Activated CD8-positive, alpha-beta T cell treated with anti-CD3 and anti-CD28 coated beads, Interleukin-2, amount 10 ng/mL, durations not matched to agents 7 days and 5 days (primary cell): ENCODE measurements at regions of chr14 and their contacts with region 1.

Region 1: GRCh38 chr14:90758028-90758889 is 58.0 kb downstream of the TTC7B start:
- DNase-seq: peak; percentile 94
- ATAC-seq: peak; percentile 96
- H3K4me3 Mint-ChIP-seq: peak overlapping the region; percentile 68
- H3K27ac Mint-ChIP-seq: peak overlapping the region; percentile 83
- H3K4me1 Mint-ChIP-seq: peaks cover 13% of the 10 kb centered on the region
- H3K27me3 Mint-ChIP-seq: peaks cover 32% of the 10 kb centered on the region

Region 2: DNA sequence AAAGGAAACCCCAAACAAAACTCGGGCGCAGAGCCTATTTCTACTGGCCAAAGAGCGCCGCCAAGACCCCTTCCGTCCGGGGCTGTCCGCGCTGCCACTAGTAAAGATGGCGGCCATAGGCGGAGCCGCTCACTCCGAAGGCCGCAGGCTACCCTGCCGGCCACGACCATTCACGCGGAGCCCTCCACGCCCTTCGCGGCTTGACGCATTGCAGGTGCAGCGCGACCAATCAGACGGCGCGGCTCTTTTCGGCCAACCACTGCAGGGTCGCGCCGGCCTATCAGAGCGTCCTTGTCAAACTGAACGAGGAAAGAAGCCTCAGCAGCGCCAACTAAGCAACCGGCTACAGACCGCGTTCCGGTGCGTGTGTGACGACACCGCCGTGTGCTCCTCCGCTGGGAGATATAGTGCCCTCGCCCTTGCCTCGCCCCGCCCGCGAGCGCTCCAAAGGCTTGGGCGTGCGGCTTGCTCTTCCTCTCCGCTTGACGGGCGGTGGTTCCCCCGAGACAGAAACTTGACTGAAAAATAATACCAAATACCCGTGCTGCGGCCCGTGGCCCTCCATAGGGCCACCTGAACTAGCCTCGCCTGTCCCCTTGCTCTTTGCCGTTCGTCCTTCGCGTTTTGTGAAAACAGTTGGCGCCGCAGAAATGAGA is 375.1 kb before region 1 on chr14:
- CTCF ChIA-PET with region 1: interaction called, 13 read pairs
- POLR2A ChIA-PET with region 1: interaction called, 3 read pairs
- DNase-seq: peak; percentile 99
- ATAC-seq: peak; percentile 88
- H3K4me3 Mint-ChIP-seq: no peak overlapping the region
- H3K27ac Mint-ChIP-seq: no peak overlapping the region
- H3K4me1 Mint-ChIP-seq: peaks cover 23% of the 10 kb centered on the region
- H3K27me3 Mint-ChIP-seq: no peaks in the 10 kb centered on the region

Region 3: GRCh38 chr14:90697577-90698206 is 60.6 kb before region 1 on chr14:
- CTCF ChIA-PET with region 1: interaction called, 27 read pairs
- POLR2A ChIA-PET with region 1: no interaction called
- DNase-seq: peak; percentile 82
- ATAC-seq: peak; percentile 92
- H3K4me3 Mint-ChIP-seq: no peak overlapping the region
- H3K27ac Mint-ChIP-seq: no peak overlapping the region
- H3K4me1 Mint-ChIP-seq: peaks cover 6% of the 10 kb centered on the region
- H3K27me3 Mint-ChIP-seq: no peaks in the 10 kb centered on the region

Region 4: DNA sequence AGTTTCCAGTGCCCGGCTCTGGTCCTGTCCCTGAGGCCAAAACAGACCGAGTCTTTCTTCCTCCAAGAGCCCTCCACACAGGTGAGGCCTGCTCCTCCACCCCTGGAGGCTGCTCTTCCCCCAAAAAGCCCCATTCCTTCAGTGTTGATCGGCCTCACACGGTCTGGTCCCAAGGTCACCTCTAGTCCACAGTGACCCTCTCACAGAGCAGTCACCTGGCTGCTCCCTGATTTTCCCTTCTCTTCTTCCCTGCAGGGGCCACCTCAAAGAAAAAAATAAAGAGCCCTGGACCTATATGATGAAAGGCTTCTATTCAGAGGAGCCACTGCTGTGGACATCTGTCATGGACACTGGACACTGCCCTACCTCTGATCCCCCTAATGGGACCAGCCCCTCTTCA is 15.4 kb after region 1 on chr14:
- CTCF ChIA-PET with region 1: interaction called, 26 read pairs
- POLR2A ChIA-PET with region 1: no interaction called
- DNase-seq: no peak
- ATAC-seq: no peak
- H3K4me3 Mint-ChIP-seq: no peak overlapping the region
- H3K27ac Mint-ChIP-seq: no peak overlapping the region
- H3K4me1 Mint-ChIP-seq: no peaks in the 10 kb centered on the region
- H3K27me3 Mint-ChIP-seq: no peaks in the 10 kb centered on the region

Region 5: GRCh38 chr14:90883782-90884181 is 125.5 kb after region 1 on chr14:
- CTCF ChIA-PET with region 1: no interaction called
- POLR2A ChIA-PET with region 1: no interaction called
- DNase-seq: no peak
- ATAC-seq: no peak
- H3K4me3 Mint-ChIP-seq: no peak overlapping the region
- H3K27ac Mint-ChIP-seq: no peak overlapping the region
- H3K4me1 Mint-ChIP-seq: no peaks in the 10 kb centered on the region
- H3K27me3 Mint-ChIP-seq: no peaks in the 10 kb centered on the region